ENCODE measurements at regions of chr12 and their contacts with region 1.

Region 1: GRCh38 chr12:55926738-55927587 is 731 bp downstream of the PYM1 start:
- DNase-seq: peak; percentile 92

Region 2: GRCh38 chr12:55817346-55818139 is 109.4 kb before region 1 on chr12 and contains the starts of genes ORMDL2 and SARNP:
- CTCF ChIA-PET with region 1: interaction called, 8 read pairs
- POLR2A ChIA-PET with region 1: interaction called, 30 read pairs
- DNase-seq: peak; percentile 96

Region 3: GRCh38 chr12:55829967-55830600 is 96.9 kb before region 1 on chr12:
- CTCF ChIA-PET with region 1: no interaction called
- POLR2A ChIA-PET with region 1: interaction called, 59 read pairs
- DNase-seq: no peak

Region 4: DNA sequence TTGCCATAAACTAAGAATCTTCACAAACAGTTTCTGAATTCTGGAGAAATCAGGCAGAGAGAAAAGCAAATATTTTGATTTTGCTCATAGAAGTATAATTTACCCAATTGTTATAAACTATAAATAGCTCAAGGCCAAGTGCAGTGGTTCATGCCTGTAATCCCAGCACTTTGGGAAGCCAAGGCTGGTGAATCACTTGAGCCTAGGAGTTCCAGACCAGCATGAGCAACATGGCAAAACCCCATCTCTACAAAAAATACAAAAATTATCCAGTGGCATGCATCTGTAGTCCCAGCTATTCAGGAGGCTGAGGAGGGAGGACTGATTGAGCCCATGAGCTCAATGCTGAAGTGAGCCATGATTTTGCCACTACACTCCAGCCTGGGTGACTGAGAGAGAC is 64.7 kb before region 1 on chr12:
- CTCF ChIA-PET with region 1: no interaction called
- POLR2A ChIA-PET with region 1: no interaction called
- DNase-seq: no peak

Region 5: GRCh38 chr12:55909513-55909884 is 17.5 kb before region 1 on chr12:
- CTCF ChIA-PET with region 1: no interaction called
- POLR2A ChIA-PET with region 1: no interaction called
- DNase-seq: no peak

Region 6: DNA sequence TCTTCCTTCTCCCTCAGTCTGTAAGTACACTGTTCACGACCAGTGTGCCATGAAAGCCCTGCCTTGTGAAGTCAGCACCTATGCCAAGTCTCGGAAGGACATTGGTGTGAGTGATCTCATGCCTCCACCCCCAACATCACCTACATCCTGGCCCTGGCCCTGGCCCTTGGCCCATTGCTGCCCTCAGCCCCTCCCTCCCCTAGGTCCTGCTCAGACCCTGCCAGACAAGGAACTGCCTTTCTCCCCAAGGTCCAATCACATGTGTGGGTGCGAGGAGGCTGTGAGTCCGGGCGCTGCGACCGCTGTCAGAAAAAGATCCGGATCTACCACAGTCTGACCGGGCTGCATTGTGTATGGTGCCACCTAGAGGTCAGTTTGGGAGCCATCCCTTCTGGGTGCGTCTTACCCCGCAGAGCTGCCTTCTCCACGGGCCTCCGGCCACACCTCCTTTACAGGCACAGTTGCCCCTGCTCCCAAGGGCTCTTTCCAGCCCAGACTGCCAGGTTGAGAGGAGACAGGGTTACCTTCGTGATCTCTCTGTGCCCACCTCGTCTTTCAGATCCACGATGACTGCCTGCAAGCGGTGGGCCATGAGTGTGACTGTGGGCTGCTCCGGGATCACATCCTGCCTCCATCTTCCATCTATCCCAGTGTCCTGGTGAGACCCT is 13.2 kb after region 1 on chr12:
- CTCF ChIA-PET with region 1: interaction called, 10 read pairs
- POLR2A ChIA-PET with region 1: interaction called, 14 read pairs
- DNase-seq: peak; percentile 89

Region 7: DNA sequence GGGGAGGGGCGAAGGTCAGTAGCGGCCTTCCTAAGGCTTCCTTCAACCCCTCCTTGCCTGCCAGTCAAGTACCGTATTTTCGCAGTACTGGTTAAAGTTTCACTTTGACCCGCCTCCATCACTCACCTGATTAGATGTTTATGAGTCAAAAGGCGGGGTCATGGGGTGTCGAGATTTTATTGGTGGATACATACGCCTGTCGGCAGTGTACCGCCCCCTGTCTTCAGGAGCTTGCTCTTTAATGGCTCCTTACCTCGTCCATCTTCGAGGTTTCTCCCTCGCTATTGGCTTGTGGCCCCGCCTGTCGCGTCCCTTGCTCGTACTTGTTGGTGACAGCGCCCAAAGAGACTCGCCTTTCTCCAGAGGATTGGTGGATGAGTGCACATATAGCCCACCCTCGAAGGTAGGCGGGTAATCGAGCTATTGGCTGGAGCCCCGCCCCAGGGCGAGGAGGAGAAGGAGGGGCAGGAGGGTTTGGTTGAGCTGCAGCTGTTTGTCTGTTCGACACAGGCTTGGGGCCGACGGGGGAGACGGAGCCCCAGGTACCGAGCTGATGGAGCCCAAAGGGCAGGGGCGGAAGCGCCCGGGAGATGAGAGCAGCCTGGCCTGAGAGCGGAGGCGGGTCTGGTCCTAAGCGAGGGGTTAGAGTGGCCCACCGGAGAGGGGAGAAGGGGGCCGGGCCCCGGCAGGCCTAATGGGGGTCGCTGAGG is 46.8 kb after region 1 on chr12 and contains the start of gene RAB5B:
- CTCF ChIA-PET with region 1: no interaction called
- POLR2A ChIA-PET with region 1: interaction called, 13 read pairs
- DNase-seq: peak; percentile 94

Measured in HEK293T (cell line).